Common myeloid progenitor, CD34-positive (primary cell): ENCODE measurements at regions of chr11 and their contacts with region 1.

Region 1: DNA sequence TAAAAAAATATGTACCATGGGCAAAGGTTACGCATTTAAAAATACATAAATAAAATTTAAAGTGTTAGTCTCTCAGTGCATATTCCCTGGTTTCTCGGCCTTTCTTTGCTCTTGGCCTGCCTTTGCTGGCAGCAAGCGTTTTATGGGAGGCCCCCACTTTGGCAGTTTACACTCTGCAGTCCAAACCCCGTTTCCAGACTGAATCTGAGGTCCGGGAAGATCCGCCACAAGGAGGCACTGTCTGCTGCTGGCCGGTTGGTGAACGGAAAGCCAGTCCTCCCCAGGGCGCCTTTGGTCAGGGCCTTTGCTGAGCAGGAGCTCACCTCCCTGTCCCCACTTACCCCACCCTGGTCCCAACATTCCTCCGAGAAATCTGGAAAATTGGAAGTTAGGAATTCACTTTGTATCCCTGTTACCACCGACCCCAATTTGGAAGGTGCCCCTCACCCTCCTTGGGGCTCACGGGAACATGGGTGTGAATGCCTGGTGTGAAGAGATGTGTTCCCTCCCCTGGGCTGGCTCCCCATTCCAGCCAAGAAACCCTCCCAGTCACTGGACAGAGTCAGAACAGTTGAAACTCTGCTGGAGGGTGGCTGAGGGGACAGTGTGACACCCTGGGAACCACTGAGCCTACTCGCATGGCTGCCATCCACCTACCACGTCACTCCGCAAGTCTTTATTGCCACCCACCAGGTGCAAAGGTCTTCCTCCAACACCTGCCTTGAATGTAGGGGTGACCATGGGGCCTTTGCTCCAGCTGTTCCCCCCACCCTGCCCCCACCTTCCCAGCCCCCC is 9.4 kb upstream of the SF1 start:
- DNase-seq: peak; percentile 50 to 76 (median 72)
- H3K4me3 ChIP-seq: no peak overlapping the region
- H3K27ac ChIP-seq: no peak overlapping the region
- H3K4me1 ChIP-seq: peaks cover 0 to 5% (median 2%) of the 10 kb centered on the region in 4 experiments
- H3K27me3 ChIP-seq: no peaks in the 10 kb centered on the region

Region 2: DNA sequence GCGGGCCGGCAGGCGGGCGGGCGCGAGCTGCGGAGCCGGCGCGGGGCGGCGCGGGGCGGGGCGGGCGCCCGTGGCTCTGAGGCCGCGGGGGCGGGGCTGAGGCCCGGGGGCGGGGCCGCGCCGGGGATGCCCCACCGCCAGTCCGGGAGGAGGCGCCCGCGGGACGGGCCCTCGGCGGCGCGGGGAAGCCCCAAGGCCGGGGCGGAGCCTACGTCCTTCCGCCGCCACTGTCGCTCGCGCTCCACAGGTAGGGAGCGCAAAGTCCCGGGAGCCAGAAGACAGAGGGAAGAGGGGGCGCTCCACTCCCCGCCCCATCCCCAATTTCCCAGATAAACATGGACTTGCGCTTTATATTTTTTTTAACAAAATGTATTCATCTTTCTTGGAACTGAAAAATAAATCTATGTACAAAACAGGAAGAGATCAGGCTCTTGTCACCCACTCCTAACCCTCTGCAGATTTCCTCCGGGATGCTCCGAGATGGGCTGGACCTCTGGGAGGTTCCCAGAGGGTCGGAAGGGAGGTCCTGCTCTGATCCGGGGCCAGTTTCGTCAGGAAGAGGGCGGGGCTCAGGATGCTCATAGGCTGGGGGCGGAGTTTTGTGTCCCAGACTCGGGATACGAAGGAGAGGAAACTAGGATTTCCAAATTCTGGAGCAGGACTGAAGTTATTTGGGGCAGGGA is 15.6 kb after region 1 on chr11 and contains the start of gene MAP4K2:
- CTCF ChIA-PET with region 1: interaction called, 42 read pairs
- POLR2A ChIA-PET with region 1: no interaction called
- DNase-seq: peak; percentile 77 to 82 (median 79)
- H3K4me3 ChIP-seq: peak within 1 kb of the TSS; percentile 64 to 91 (median 80)
- H3K27ac ChIP-seq: peak within 1 kb of the TSS; percentile 58 to 86
- H3K4me1 ChIP-seq: peaks cover 0 to 55% (median 49%) of the 10 kb centered on the region in 4 experiments
- H3K27me3 ChIP-seq: no peaks in the 10 kb centered on the region